Naive thymus-derived CD4-positive, alpha-beta T cell (primary cell): ENCODE measurements at regions of chr3 and their contacts with region 1.

Region 1: DNA sequence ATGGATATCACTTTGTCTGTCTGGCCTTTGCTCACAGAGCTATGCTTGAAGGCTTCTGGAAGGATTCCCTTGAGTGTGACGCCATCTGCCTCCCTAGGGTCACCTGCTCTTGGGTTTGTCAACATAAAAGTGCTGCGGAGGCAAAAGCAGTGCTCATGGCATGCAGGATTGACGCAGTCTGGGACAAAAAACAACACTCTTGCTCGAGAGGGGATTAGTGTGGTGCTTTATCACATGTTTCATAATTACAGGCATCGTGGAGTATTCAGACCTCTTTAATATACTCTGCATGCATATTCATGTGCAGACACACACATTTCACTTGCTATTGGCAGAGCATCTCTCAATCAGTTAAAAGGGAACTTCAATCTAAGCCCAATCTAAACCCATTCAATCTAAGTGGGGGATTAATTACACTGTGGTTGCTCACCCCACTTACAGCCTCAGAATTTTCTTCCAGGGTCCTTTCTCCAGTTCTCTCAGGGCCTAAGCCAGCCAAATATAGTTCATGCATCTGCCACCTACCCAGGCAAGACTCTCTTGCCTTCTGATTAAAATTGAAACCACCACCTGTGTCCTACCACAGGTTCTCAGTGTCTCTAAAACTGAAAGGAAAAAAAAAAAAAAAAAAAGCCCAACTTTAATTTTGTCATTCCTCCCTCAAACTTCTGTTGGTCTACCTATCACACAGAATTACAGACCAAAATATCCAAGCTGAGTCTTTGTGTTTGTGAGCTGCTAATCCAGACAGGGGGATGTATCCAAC is 75.6 kb downstream of the BFSP2 start:
- DNase-seq: no peak
- ATAC-seq: peak; percentile 61
- H3K4me3 ChIP-seq: no peak overlapping the region
- H3K4me3 Mint-ChIP-seq: peak overlapping the region in 1 of 10 donors; percentile 27
- H3K27ac ChIP-seq: no peak overlapping the region
- H3K27ac Mint-ChIP-seq: peak overlapping the region in 4 of 9 donors; percentile 17 to 82 (median 62)
- H3K4me1 ChIP-seq: peaks cover 0 to 5% of the 10 kb centered on the region in 2 donors
- H3K4me1 Mint-ChIP-seq: peaks cover 14 to 49% (median 39%) of the 10 kb centered on the region in 7 donors
- H3K27me3 ChIP-seq: no peaks in the 10 kb centered on the region
- H3K27me3 Mint-ChIP-seq: no peaks in the 10 kb centered on the region

Region 2: DNA sequence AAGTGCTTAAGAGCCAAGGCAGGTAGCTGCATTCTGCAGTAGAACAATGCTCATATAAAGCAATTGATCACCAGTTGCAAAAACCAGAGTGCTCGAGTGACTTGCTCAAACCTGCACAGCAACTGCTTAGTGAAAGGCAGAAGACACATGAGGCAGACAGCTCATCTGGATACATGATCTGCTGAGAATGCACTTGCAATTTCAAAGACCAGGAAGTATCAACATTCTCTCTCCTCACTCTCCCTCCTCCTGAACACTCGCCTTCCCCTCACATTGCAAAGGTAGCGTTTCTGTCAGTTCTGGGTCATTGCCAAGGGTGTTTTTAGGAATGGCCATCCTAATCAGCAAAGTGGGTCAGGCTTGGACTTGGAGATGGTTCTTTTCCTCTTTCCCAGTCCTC is 14.6 kb before region 1 on chr3:
- CTCF ChIA-PET with region 1: interaction called, 3 read pairs
- POLR2A ChIA-PET with region 1: no interaction called
- intact Hi-C with region 1: loop called in 1 of 2 experiments (anchors 1 kb)
- DNase-seq: peak in 1 of 9 donors; percentile 14
- ATAC-seq: no peak
- H3K4me3 ChIP-seq: no peak overlapping the region
- H3K4me3 Mint-ChIP-seq: peak overlapping the region in 8 of 10 donors; percentile 25 to 68 (median 46)
- H3K27ac ChIP-seq: peak overlapping the region; percentile 8
- H3K27ac Mint-ChIP-seq: peak overlapping the region in 5 of 9 donors; percentile 6 to 75 (median 44)
- H3K4me1 ChIP-seq: peaks cover 0 to 6% of the 10 kb centered on the region in 2 donors
- H3K4me1 Mint-ChIP-seq: peaks cover 11 to 47% (median 35%) of the 10 kb centered on the region in 7 donors
- H3K27me3 ChIP-seq: no peaks in the 10 kb centered on the region
- H3K27me3 Mint-ChIP-seq: peaks cover 0 to 4% (median 0%) of the 10 kb centered on the region in 5 donors

Region 3: DNA sequence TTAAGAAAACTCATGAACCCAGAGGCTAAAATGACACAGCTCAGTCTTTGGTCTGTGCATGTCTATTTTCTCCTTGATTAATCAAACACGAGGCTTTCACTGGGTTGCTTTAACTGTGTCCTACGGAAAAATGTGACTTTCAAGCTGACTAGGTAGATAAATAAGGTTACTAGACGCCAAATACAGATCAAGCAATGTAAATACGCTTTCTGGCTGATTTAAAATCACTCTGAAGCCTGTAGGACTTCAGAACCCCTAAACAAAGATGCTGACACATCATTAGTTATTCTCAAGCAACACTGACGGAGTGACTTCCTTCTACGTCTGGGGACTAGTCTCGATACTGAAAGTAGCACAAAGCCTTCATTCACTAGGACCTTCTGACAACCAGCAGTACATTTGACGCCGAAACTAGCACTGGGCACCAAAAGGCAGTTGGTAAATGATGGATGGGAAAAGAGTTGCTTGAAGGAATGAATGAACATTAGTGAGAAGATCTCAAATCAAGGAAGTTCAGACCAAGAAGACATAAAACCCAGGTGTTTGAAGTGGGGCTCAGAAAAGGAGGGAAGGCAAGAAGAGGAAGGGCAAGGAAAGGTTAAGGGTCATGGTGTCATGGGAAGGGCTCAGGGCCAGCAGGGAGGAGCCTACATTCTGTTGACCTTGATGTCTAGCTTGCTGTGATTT is 30.9 kb after region 1 on chr3:
- CTCF ChIA-PET with region 1: interaction called, 4 read pairs
- POLR2A ChIA-PET with region 1: no interaction called
- intact Hi-C with region 1: loop called in 1 of 2 experiments (anchors 2 kb)
- DNase-seq: peak in 7 of 9 donors; percentile 23 to 60 (median 50)
- ATAC-seq: peak; percentile 93
- H3K4me3 ChIP-seq: peak overlapping the region; percentile 1
- H3K4me3 Mint-ChIP-seq: peak overlapping the region; percentile 71 to 93 (median 82)
- H3K27ac ChIP-seq: peak overlapping the region; percentile 65
- H3K27ac Mint-ChIP-seq: peak overlapping the region; percentile 88 to 97 (median 94)
- H3K4me1 ChIP-seq: no peaks in the 10 kb centered on the region
- H3K4me1 Mint-ChIP-seq: peaks cover 10 to 19% (median 17%) of the 10 kb centered on the region in 7 donors
- H3K27me3 ChIP-seq: no peaks in the 10 kb centered on the region
- H3K27me3 Mint-ChIP-seq: no peaks in the 10 kb centered on the region

Region 4: GRCh38 chr3:133547432-133548041 is 72.1 kb after region 1 on chr3:
- CTCF ChIA-PET with region 1: no interaction called
- POLR2A ChIA-PET with region 1: no interaction called
- intact Hi-C with region 1: no loop called
- DNase-seq: no peak
- ATAC-seq: no peak
- H3K4me3 ChIP-seq: no peak overlapping the region
- H3K4me3 Mint-ChIP-seq: no peak overlapping the region
- H3K27ac ChIP-seq: no peak overlapping the region
- H3K27ac Mint-ChIP-seq: peak overlapping the region in 3 of 9 donors; percentile 4 to 60 (median 20)
- H3K4me1 ChIP-seq: no peaks in the 10 kb centered on the region
- H3K4me1 Mint-ChIP-seq: peaks cover 0 to 3% (median 0%) of the 10 kb centered on the region in 7 donors
- H3K27me3 ChIP-seq: no peaks in the 10 kb centered on the region
- H3K27me3 Mint-ChIP-seq: peaks cover 0 to 2% (median 0%) of the 10 kb centered on the region in 5 donors